ENCODE measurements at regions of chr11 and their contacts with region 1.

Region 1: GRCh38 chr11:26096451-26096850 is 235.5 kb upstream of the ANO3 start:
- DNase-seq: no peak
- ATAC-seq: no peak
- H3K4me3 Mint-ChIP-seq: no peak overlapping the region
- H3K27ac Mint-ChIP-seq: no peak overlapping the region
- H3K4me1 Mint-ChIP-seq: peaks cover 19% of the 10 kb centered on the region
- H3K27me3 Mint-ChIP-seq: no peaks in the 10 kb centered on the region
- CTCF ChIP-seq: no peak

Region 2: GRCh38 chr11:26037716-26038115 is 58.7 kb before region 1 on chr11:
- CTCF ChIA-PET with region 1: no interaction called
- POLR2A ChIA-PET with region 1: no interaction called
- intact Hi-C with region 1: loop called (anchors 1 kb)
- DNase-seq: no peak
- ATAC-seq: no peak
- H3K4me3 Mint-ChIP-seq: no peak overlapping the region
- H3K27ac Mint-ChIP-seq: no peak overlapping the region
- H3K4me1 Mint-ChIP-seq: peaks cover 3% of the 10 kb centered on the region
- H3K27me3 Mint-ChIP-seq: no peaks in the 10 kb centered on the region
- CTCF ChIP-seq: no peak